Astrocyte of the cerebellum (primary cell): ENCODE measurements at regions of chr11 and their contacts with region 1.

Region 1: DNA sequence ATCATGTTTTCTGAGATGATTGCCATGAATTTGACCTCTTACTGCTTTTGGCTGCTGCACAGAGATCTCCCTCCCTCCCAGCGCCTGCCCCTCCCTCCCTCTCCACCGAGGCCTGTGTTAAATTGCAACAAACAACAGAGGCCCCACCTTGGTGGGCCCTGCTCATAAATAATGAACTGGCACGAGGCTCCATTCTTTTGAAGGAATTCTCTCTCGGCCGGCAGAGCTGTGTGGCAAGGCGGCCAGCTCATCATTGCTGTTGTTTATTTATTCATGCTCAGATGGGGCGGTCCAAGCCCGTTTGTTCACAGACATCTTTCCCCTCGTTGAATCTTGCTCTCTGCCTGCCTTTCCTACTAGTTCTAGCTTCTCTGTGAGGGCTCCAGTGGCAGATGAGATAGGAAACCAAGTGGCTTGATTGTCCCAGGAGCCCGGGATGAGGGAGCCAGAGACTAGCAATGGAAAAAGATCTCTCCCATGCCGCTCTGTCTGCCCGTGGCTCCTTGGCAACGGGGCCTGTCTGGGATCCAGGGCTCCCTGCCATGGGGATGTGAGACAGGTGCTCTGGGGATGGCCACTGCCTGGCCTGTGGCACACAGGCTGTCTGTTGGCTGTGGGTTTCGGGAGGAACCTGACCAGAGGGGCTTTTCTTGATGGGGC is 192.6 kb downstream of the DSCAML1 start:
- DNase-seq: no peak
- H3K4me3 ChIP-seq: no peak overlapping the region
- CTCF ChIP-seq: no peak

Region 2: GRCh38 chr11:117519170-117519569 is 85.3 kb before region 1 on chr11:
- in situ Hi-C with region 1: no loop called
- DNase-seq: no peak
- H3K4me3 ChIP-seq: no peak overlapping the region
- CTCF ChIP-seq: no peak

Region 3: DNA sequence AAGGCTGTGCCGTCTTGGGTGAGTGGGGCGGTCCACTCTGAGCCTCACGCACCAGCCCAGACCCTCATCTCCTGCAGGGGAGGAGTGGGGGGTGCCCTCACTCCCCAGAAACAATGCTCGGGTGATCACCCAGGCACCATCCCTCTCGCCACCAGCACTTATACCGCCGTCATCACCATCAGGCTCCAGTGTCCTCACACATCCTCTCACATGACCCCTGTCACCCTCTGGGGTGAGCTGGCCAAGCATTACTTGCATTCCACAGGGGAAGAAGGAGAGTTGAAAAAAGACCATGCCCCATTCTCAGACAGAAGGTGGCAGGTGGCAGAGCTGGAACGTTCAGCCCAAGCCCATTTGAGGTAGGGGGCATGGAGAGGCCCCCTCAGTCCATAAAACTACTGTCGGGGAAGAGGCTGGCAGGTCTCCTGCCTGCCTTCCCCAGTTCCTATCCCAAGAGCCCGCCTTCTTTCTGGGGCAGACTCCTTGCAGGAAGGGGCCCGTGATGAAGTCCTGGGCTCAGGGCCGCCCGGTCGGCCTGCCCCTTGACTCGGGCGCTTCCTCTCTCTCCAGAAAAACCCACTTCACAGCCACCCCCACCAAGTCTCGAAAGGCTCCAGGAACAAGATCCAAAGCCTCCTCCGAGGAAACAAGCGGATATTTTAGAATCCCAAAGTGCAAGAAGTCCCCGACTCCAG is 39.3 kb after region 1 on chr11:
- in situ Hi-C with region 1: loop called (anchors 5 kb)
- DNase-seq: no peak
- H3K4me3 ChIP-seq: no peak overlapping the region
- CTCF ChIP-seq: no peak